ENCODE measurements at regions of chr1 and their contacts with region 1.

Region 1: DNA sequence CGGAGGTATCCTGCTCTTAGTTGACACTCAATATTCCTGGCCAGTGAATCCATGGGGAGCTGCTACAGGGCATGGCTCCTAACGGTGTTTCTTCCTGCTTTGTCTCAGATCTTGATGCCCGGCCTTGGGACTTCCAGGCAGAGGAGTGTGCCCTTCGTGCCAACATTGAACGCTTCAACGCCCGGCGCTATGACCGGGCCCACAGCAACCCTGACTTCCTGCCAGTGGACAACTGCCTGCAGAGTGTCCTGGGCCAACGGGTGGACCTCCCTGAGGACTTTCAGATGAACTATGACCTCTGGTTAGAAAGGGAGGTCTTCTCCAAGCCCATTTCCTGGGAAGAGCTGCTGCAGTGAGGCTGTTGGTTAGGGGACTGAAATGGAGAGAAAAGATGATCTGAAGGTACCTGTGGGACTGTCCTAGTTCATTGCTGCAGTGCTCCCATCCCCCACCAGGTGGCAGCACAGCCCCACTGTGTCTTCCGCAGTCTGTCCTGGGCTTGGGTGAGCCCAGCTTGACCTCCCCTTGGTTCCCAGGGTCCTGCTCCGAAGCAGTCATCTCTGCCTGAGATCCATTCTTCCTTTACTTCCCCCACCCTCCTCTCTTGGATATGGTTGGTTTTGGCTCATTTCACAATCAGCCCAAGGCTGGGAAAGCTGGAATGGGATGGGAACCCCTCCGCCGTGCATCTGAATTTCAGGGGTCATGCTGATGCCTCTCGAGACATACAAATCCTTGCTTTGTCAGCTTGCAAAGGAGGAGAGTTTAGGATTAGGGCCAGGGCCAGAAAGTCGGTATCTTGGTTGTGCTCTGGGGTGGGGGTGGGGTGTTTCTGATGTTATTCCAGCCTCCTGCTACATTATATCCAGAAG is 16.7 kb downstream of the ALX3 start:
- DNase-seq: peak; percentile 29 to 79 (median 70)
- ATAC-seq: peak; percentile 92
- H3K4me3 ChIP-seq: no peak overlapping the region
- H3K4me3 Mint-ChIP-seq: no peak overlapping the region
- H3K27ac ChIP-seq: no peak overlapping the region
- H3K27ac Mint-ChIP-seq: no peak overlapping the region
- H3K4me1 ChIP-seq: no peaks in the 10 kb centered on the region
- H3K4me1 Mint-ChIP-seq: no peaks in the 10 kb centered on the region
- H3K27me3 ChIP-seq: no peaks in the 10 kb centered on the region
- H3K27me3 Mint-ChIP-seq: no peaks in the 10 kb centered on the region
- CTCF ChIP-seq: peak; percentile 85

Region 2: GRCh38 chr1:109137964-109138741 is 915.6 kb before region 1 on chr1:
- CTCF ChIA-PET with region 1: no interaction called
- POLR2A ChIA-PET with region 1: no interaction called
- intact Hi-C with region 1: no loop called
- DNase-seq: no peak
- ATAC-seq: no peak
- H3K4me3 ChIP-seq: no peak overlapping the region
- H3K4me3 Mint-ChIP-seq: no peak overlapping the region
- H3K27ac ChIP-seq: no peak overlapping the region
- H3K27ac Mint-ChIP-seq: no peak overlapping the region
- H3K4me1 ChIP-seq: no peaks in the 10 kb centered on the region
- H3K4me1 Mint-ChIP-seq: peaks cover 4% of the 10 kb centered on the region
- H3K27me3 ChIP-seq: no peaks in the 10 kb centered on the region
- H3K27me3 Mint-ChIP-seq: no peaks in the 10 kb centered on the region
- CTCF ChIP-seq: no peak

Region 3: GRCh38 chr1:109790735-109791494 is 262.9 kb before region 1 on chr1:
- CTCF ChIA-PET with region 1: no interaction called
- POLR2A ChIA-PET with region 1: no interaction called
- intact Hi-C with region 1: no loop called
- DNase-seq: peak; percentile 55 to 90 (median 84)
- ATAC-seq: peak; percentile 94
- H3K4me3 ChIP-seq: no peak overlapping the region
- H3K4me3 Mint-ChIP-seq: no peak overlapping the region
- H3K27ac ChIP-seq: peak overlapping the region; percentile 14 to 74
- H3K27ac Mint-ChIP-seq: peak overlapping the region; percentile 85
- H3K4me1 ChIP-seq: peaks cover 59% of the 10 kb centered on the region
- H3K4me1 Mint-ChIP-seq: peaks cover 70% of the 10 kb centered on the region
- H3K27me3 ChIP-seq: no peaks in the 10 kb centered on the region
- H3K27me3 Mint-ChIP-seq: no peaks in the 10 kb centered on the region
- CTCF ChIP-seq: peak; percentile 54

Region 4: DNA sequence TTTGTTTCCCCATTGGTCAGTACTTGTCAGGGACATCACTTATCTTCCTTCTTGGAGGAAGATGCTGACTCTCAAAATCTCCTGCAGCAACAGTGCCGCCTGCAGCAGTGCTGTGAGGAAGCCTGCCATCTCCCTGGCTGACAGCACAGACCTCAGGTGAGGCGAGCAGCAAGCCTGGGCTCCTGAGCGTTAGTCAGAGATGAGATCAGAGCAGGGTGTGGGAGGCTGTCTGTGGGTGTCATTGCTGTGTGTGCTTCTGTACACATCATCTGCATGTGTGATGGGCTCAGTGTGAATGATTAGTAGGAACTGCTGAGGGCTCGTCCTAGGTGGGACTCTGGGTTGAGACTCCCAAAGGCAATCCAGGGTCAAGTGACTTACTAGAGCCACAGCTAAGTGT is 13.2 kb before region 1 on chr1:
- CTCF ChIA-PET with region 1: interaction called, 46 read pairs
- POLR2A ChIA-PET with region 1: interaction called, 4 read pairs
- intact Hi-C with region 1: no loop called
- DNase-seq: no peak
- ATAC-seq: no peak
- H3K4me3 ChIP-seq: no peak overlapping the region
- H3K4me3 Mint-ChIP-seq: no peak overlapping the region
- H3K27ac ChIP-seq: no peak overlapping the region
- H3K27ac Mint-ChIP-seq: no peak overlapping the region
- H3K4me1 ChIP-seq: peaks cover 5% of the 10 kb centered on the region
- H3K4me1 Mint-ChIP-seq: peaks cover 15% of the 10 kb centered on the region
- H3K27me3 ChIP-seq: no peaks in the 10 kb centered on the region
- H3K27me3 Mint-ChIP-seq: no peaks in the 10 kb centered on the region
- CTCF ChIP-seq: no peak

Region 5: GRCh38 chr1:110067479-110067892 is 13.7 kb after region 1 on chr1:
- CTCF ChIA-PET with region 1: interaction called, 24 read pairs
- POLR2A ChIA-PET with region 1: no interaction called
- intact Hi-C with region 1: no loop called
- DNase-seq: no peak
- ATAC-seq: no peak
- H3K4me3 ChIP-seq: no peak overlapping the region
- H3K4me3 Mint-ChIP-seq: no peak overlapping the region
- H3K27ac ChIP-seq: no peak overlapping the region
- H3K27ac Mint-ChIP-seq: no peak overlapping the region
- H3K4me1 ChIP-seq: peaks cover 26% of the 10 kb centered on the region
- H3K4me1 Mint-ChIP-seq: peaks cover 15% of the 10 kb centered on the region
- H3K27me3 ChIP-seq: peaks cover 29 to 34% of the 10 kb centered on the region in 2 experiments
- H3K27me3 Mint-ChIP-seq: peaks cover 48% of the 10 kb centered on the region
- CTCF ChIP-seq: no peak